ENCODE measurements at regions of chr16 and their contacts with region 1.

Region 1: GRCh38 chr16:31577411-31577810 is 49.7 kb downstream of the AHSP start:
- DNase-seq: no peak
- H3K4me3 ChIP-seq: no peak overlapping the region
- CTCF ChIP-seq: no peak

Region 2: GRCh38 chr16:31507929-31508705 is 69.3 kb before region 1 on chr16 and contains the start of gene RUSF1:
- in situ Hi-C with region 1: no loop called
- DNase-seq: peak; percentile 71
- H3K4me3 ChIP-seq: peak within 1 kb of the TSS; percentile 95
- CTCF ChIP-seq: no peak

Region 3: GRCh38 chr16:31696968-31697743 is 119.7 kb after region 1 on chr16:
- in situ Hi-C with region 1: loop called (anchors 25 kb)
- DNase-seq: no peak
- H3K4me3 ChIP-seq: no peak overlapping the region
- CTCF ChIP-seq: peak; percentile 66